MCF 10A (cell line): ENCODE measurements at regions of chr16 and their contacts with region 1.

Region 1: GRCh38 chr16:66894948-66895688 is 14.8 kb downstream of the PDP2 start:
- DNase-seq: peak; percentile 80
- H3K4me3 Mint-ChIP-seq: no peak overlapping the region
- H3K27ac Mint-ChIP-seq: peak overlapping the region; percentile 92
- H3K4me1 Mint-ChIP-seq: peaks cover 29% of the 10 kb centered on the region
- H3K27me3 Mint-ChIP-seq: no peaks in the 10 kb centered on the region
- CTCF ChIP-seq: peak; percentile 79

Region 2: DNA sequence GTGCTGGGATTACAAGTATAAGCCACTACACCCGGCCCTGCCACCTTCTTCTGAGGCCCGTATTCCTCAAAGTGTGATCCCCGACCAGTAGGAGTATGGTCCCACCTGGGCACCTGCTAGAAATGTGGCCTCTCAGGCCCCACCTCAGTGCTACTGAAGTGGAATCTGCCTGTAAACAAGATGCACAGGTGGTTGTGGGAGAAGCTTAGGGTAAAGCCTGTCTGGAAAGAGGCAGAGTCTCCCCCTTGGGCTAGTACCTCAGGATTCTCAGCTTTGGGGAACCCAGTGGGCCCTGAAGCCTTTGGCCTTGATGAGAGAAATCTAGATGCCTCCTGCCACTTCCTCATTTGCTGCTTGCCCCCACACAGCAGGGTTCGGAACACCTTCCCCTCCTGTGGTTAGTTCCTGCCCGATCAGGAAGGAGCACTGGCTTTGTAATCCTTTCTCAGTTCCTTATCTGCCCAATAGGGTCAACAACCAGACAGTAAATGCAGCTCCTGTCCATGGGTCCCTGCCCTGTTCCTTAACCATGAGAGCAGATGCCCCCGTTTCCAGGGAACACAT is 370.4 kb before region 1 on chr16:
- CTCF ChIA-PET with region 1: no interaction called
- POLR2A ChIA-PET with region 1: no interaction called
- intact Hi-C with region 1: no loop called
- DNase-seq: no peak
- H3K4me3 Mint-ChIP-seq: no peak overlapping the region
- H3K27ac Mint-ChIP-seq: no peak overlapping the region
- H3K4me1 Mint-ChIP-seq: peaks cover 18% of the 10 kb centered on the region
- H3K27me3 Mint-ChIP-seq: no peaks in the 10 kb centered on the region
- CTCF ChIP-seq: no peak

Region 3: GRCh38 chr16:66880288-66881013 is 14.7 kb before region 1 on chr16 and contains the start of gene PDP2:
- CTCF ChIA-PET with region 1: interaction called, 38 read pairs
- POLR2A ChIA-PET with region 1: interaction called, 25 read pairs
- intact Hi-C with region 1: no loop called
- DNase-seq: peak; percentile 96
- H3K4me3 Mint-ChIP-seq: peak within 1 kb of the TSS; percentile 96
- H3K27ac Mint-ChIP-seq: peak within 1 kb of the TSS; percentile 90
- H3K4me1 Mint-ChIP-seq: peaks cover 11% of the 10 kb centered on the region
- H3K27me3 Mint-ChIP-seq: no peaks in the 10 kb centered on the region
- CTCF ChIP-seq: no peak
- total RNA-seq, gene PDP2: 21.5 and 22.8 TPM in 2 replicates

Region 4: GRCh38 chr16:66918803-66919568 is 23.9 kb after region 1 on chr16 and contains the start of gene CDH16:
- CTCF ChIA-PET with region 1: interaction called, 25 read pairs
- POLR2A ChIA-PET with region 1: interaction called, 3 read pairs
- intact Hi-C with region 1: no loop called
- DNase-seq: no peak
- H3K4me3 Mint-ChIP-seq: no peak within 1 kb of the TSS
- H3K27ac Mint-ChIP-seq: no peak within 1 kb of the TSS
- H3K4me1 Mint-ChIP-seq: peaks cover 16% of the 10 kb centered on the region
- H3K27me3 Mint-ChIP-seq: no peaks in the 10 kb centered on the region
- CTCF ChIP-seq: no peak
- total RNA-seq, gene CDH16: 0.25 TPM in 1 of 2 replicates, not detected in the other

Region 5: DNA sequence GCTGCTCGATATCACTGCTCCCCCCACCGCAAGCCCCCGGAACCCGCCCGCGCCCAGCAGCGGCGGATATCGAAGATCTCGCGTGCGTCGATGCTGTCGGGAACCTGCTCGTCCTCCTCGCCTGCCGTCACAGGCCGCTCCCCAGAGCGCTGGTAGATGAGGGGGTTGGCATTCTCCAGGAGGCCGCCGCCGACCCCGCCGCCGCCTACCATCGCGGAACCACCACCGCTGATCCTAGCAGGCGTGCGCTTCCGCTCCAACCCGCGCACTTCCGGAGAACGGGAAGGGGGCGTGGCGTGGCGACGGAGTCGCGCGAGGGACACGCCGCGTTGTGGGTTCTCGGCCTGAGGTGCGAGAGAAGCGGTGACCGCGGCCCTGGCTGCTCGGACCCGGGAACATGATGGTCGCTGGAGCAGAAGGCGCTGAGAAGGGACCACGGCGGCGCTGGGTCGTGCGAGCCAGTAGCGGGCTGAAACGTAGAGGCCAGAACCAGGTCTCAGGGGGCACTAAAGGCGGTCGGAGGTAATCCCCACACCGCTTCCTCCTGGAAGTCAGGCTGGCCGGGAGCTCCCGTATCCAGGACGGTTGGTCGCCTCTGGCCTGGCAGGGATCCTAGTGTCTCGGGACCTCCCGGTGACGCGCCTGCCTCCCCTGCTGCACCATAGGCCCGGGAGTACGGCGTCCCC is 39.2 kb after region 1 on chr16 and contains the start of gene CIAO2B:
- CTCF ChIA-PET with region 1: interaction called, 62 read pairs
- POLR2A ChIA-PET with region 1: interaction called, 48 read pairs
- intact Hi-C with region 1: loop called (anchors 1 kb)
- DNase-seq: peak; percentile 82
- H3K4me3 Mint-ChIP-seq: peak within 1 kb of the TSS; percentile 97
- H3K27ac Mint-ChIP-seq: peak within 1 kb of the TSS; percentile 94
- H3K4me1 Mint-ChIP-seq: peaks cover 31% of the 10 kb centered on the region
- H3K27me3 Mint-ChIP-seq: no peaks in the 10 kb centered on the region
- CTCF ChIP-seq: no peak
- total RNA-seq, gene CIAO2B: 133 and 159 TPM in 2 replicates

Region 6: DNA sequence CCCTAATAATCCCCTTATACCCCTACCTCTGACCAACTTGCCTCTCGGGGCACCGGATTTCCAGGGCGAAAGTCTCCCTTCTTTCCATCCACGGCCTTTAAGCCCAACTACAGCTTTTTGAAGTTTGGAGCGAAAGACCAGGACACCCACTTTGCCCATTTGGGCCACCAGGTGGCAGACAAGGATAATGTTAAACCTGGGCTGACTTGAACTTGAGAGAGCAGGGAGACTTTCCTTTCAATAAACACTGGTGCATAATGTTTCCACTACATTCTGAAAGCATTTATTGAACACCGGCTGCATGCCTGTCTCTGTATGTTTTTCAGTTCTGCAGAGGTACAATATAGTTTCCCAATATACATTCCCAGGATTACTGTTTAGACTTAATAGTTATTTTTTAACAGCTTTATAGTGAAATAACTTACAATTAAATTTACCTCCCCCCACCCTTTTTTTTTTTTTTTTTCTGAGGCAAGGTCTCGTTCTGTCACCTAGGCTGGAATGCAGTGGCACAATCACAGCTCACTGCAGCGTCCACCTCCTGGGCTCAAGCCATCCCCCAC is 59.1 kb after region 1 on chr16:
- CTCF ChIA-PET with region 1: interaction called, 37 read pairs
- POLR2A ChIA-PET with region 1: interaction called, 10 read pairs
- intact Hi-C with region 1: loop called (anchors 2 kb)
- DNase-seq: peak; percentile 88
- H3K4me3 Mint-ChIP-seq: peak overlapping the region; percentile 51
- H3K27ac Mint-ChIP-seq: peak overlapping the region; percentile 70
- H3K4me1 Mint-ChIP-seq: peaks cover 17% of the 10 kb centered on the region
- H3K27me3 Mint-ChIP-seq: no peaks in the 10 kb centered on the region
- CTCF ChIP-seq: peak; percentile 67

Region 7: DNA sequence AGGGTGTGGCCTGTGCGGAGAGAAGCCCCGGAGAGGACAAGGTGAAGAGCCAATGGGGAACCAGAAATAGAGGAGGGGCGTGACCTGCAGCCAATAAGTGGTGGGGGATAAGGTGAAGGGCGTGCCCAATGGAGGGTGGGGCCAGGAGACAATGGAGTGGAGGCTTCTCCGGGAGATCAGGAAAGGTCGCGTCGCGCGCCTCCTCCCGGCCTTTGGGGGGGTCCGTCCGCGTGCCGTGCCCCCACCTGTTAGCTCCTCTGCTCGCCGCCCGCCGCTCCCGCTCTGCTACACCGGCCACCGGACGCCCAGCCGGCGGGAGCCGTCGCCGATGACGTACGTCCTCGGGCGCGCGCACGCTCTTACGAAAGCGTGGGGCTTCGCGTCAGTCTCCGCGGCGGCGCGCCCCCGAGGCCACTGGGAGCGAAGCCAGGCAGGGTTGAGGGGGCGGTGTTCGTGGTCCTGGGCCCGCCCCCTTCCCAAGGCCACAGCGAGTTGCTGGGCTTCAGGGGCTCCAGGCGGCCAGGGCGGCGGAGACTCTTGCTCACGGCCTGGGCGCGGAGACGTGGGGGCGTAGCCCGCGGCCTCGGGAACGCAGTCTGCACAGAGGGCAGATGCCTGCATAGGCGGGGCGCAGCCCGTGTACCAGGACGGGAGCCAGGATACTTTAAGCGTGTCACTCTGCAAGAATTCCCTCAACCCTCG is 288.7 kb after region 1 on chr16 and contains the start of gene MATCAP1:
- CTCF ChIA-PET with region 1: no interaction called
- POLR2A ChIA-PET with region 1: no interaction called
- intact Hi-C with region 1: loop called (anchors 5 kb)
- DNase-seq: peak; percentile 98
- H3K4me3 Mint-ChIP-seq: no peak within 1 kb of the TSS
- H3K27ac Mint-ChIP-seq: no peak within 1 kb of the TSS
- H3K4me1 Mint-ChIP-seq: peaks cover 10% of the 10 kb centered on the region
- H3K27me3 Mint-ChIP-seq: no peaks in the 10 kb centered on the region
- CTCF ChIP-seq: no peak
- total RNA-seq, gene MATCAP1: 18.1 and 18.7 TPM in 2 replicates